ENCODE measurements at regions of chr10 and their contacts with region 1.

Region 1: GRCh38 chr10:5623081-5623748 is 43.2 kb downstream of the ASB13 start:
- DNase-seq: peak; percentile 89
- H3K4me3 Mint-ChIP-seq: no peak overlapping the region
- H3K27ac Mint-ChIP-seq: no peak overlapping the region
- H3K4me1 Mint-ChIP-seq: peaks cover 10% of the 10 kb centered on the region
- H3K27me3 Mint-ChIP-seq: no peaks in the 10 kb centered on the region
- CTCF ChIP-seq: peak; percentile 88

Region 2: GRCh38 chr10:5434017-5434753 is 189.0 kb before region 1 on chr10:
- CTCF ChIA-PET with region 1: interaction called, 264 read pairs
- POLR2A ChIA-PET with region 1: interaction called, 3 read pairs
- intact Hi-C with region 1: no loop called
- DNase-seq: peak; percentile 64
- H3K4me3 Mint-ChIP-seq: peak overlapping the region; percentile 22
- H3K27ac Mint-ChIP-seq: peak overlapping the region; percentile 75
- H3K4me1 Mint-ChIP-seq: peaks cover 25% of the 10 kb centered on the region
- H3K27me3 Mint-ChIP-seq: no peaks in the 10 kb centered on the region
- CTCF ChIP-seq: peak; percentile 80

Region 3: GRCh38 chr10:5453749-5454489 is 169.3 kb before region 1 on chr10:
- CTCF ChIA-PET with region 1: interaction called, 264 read pairs
- POLR2A ChIA-PET with region 1: interaction called, 121 read pairs
- intact Hi-C with region 1: no loop called
- DNase-seq: no peak
- H3K4me3 Mint-ChIP-seq: no peak overlapping the region
- H3K27ac Mint-ChIP-seq: no peak overlapping the region
- H3K4me1 Mint-ChIP-seq: peaks cover 21% of the 10 kb centered on the region
- H3K27me3 Mint-ChIP-seq: no peaks in the 10 kb centered on the region
- CTCF ChIP-seq: no peak

Region 4: GRCh38 chr10:5548527-5549223 is 74.5 kb before region 1 on chr10:
- CTCF ChIA-PET with region 1: interaction called, 21 read pairs
- POLR2A ChIA-PET with region 1: interaction called, 59 read pairs
- intact Hi-C with region 1: no loop called
- DNase-seq: peak; percentile 91
- H3K4me3 Mint-ChIP-seq: no peak overlapping the region
- H3K27ac Mint-ChIP-seq: no peak overlapping the region
- H3K4me1 Mint-ChIP-seq: peaks cover 38% of the 10 kb centered on the region
- H3K27me3 Mint-ChIP-seq: no peaks in the 10 kb centered on the region
- CTCF ChIP-seq: no peak

Region 5: GRCh38 chr10:5634918-5635317 is 11.7 kb after region 1 on chr10:
- CTCF ChIA-PET with region 1: interaction called, 12 read pairs
- POLR2A ChIA-PET with region 1: interaction called, 11 read pairs
- intact Hi-C with region 1: no loop called
- DNase-seq: no peak
- H3K4me3 Mint-ChIP-seq: no peak overlapping the region
- H3K27ac Mint-ChIP-seq: no peak overlapping the region
- H3K4me1 Mint-ChIP-seq: peaks cover 24% of the 10 kb centered on the region
- H3K27me3 Mint-ChIP-seq: no peaks in the 10 kb centered on the region
- CTCF ChIP-seq: no peak

Region 6: DNA sequence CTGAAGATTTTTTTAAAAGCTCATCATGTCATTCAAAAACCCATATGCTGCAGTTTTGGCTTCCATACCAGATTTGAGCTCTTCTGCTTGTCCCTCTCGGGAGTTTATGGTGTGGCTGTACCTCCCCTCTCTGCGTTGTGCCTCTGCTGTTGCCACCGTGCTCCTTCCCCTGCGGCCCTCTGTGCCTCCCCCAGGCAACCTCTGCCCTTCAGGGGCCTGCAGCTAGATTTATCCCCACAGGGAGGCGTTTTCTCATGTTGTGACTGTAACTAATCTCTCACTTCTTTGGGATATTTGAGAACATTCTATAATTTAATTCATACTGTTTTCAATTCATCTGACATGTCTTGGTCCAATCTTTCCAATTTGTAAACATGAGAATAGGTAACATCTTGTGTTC is 114.1 kb after region 1 on chr10:
- CTCF ChIA-PET with region 1: no interaction called
- POLR2A ChIA-PET with region 1: no interaction called
- intact Hi-C with region 1: no loop called
- DNase-seq: no peak
- H3K4me3 Mint-ChIP-seq: no peak overlapping the region
- H3K27ac Mint-ChIP-seq: no peak overlapping the region
- H3K4me1 Mint-ChIP-seq: no peaks in the 10 kb centered on the region
- H3K27me3 Mint-ChIP-seq: no peaks in the 10 kb centered on the region
- CTCF ChIP-seq: no peak